ENCODE measurements at regions of chr2 and their contacts with region 1.

Region 1: GRCh38 chr2:233084488-233084887 is 24.3 kb downstream of the INPP5D start:
- DNase-seq: no peak
- H3K4me3 ChIP-seq: no peak overlapping the region
- H3K27ac ChIP-seq: no peak overlapping the region
- H3K4me1 ChIP-seq: no peaks in the 10 kb centered on the region
- H3K27me3 ChIP-seq: no peaks in the 10 kb centered on the region
- CTCF ChIP-seq: no peak

Region 2: GRCh38 chr2:233037078-233037477 is 47.4 kb before region 1 on chr2:
- CTCF ChIA-PET with region 1: no interaction called
- POLR2A ChIA-PET with region 1: no interaction called
- intact Hi-C with region 1: no loop called
- DNase-seq: peak in 1 of 2 experiments; percentile 74
- H3K4me3 ChIP-seq: no peak overlapping the region
- H3K27ac ChIP-seq: peak overlapping the region; percentile 50
- H3K4me1 ChIP-seq: peaks cover 48% of the 10 kb centered on the region
- H3K27me3 ChIP-seq: no peaks in the 10 kb centered on the region
- CTCF ChIP-seq: no peak

Region 3: GRCh38 chr2:233061591-233062450 is 22.7 kb before region 1 on chr2:
- CTCF ChIA-PET with region 1: no interaction called
- POLR2A ChIA-PET with region 1: no interaction called
- intact Hi-C with region 1: no loop called
- DNase-seq: peak in 1 of 2 experiments; percentile 31
- H3K4me3 ChIP-seq: no peak overlapping the region
- H3K27ac ChIP-seq: no peak overlapping the region
- H3K4me1 ChIP-seq: no peaks in the 10 kb centered on the region
- H3K27me3 ChIP-seq: no peaks in the 10 kb centered on the region
- CTCF ChIP-seq: 0 out of 2 replicates have a peak, but pooled peaks have one; percentile 17

Region 4: DNA sequence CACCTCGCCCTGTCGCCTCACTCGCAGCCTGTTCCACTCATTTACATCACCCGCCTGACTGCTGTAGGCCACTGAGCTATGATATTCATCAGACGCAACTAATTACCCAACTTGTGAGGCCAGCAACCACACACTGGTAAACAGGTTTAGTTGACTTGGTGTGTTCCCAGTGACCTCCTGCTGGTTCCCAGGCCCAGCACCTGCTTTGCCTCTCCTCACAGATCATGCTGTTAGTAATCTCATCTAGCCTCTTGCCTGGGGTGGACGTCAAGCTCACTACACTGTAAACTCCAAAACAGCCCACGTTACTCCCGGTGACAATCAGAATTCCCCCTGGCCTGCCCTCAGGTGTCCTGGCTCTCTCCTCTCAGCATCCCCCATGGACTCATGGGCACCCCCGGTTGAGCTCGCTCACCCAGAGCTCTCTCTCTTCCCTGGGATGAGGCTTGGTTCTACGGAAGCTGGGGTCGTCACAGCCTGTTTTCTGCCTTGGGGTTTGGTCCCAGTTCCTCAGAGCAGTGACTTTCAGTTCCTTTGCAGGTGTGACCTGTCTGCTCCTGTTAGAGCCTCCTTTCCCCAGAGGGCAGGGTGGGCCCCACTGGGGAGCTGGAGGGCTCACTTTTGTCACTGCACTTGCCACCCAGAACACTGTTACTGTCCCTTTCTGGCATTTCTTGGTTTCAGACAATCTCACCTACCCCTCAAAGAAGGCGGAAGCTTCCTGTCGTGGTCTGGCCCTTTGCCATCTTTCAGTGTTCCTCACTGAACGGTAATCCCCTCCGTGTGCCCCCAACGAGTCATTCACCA is 15.9 kb after region 1 on chr2:
- CTCF ChIA-PET with region 1: no interaction called
- POLR2A ChIA-PET with region 1: no interaction called
- intact Hi-C with region 1: no loop called
- DNase-seq: no peak
- H3K4me3 ChIP-seq: no peak overlapping the region
- H3K27ac ChIP-seq: no peak overlapping the region
- H3K4me1 ChIP-seq: no peaks in the 10 kb centered on the region
- H3K27me3 ChIP-seq: no peaks in the 10 kb centered on the region
- CTCF ChIP-seq: no peak

Region 5: GRCh38 chr2:233152541-233152940 is 68.1 kb after region 1 on chr2:
- CTCF ChIA-PET with region 1: no interaction called
- POLR2A ChIA-PET with region 1: interaction called, 12 read pairs
- intact Hi-C with region 1: no loop called
- DNase-seq: no peak
- H3K4me3 ChIP-seq: no peak overlapping the region
- H3K27ac ChIP-seq: no peak overlapping the region
- H3K4me1 ChIP-seq: no peaks in the 10 kb centered on the region
- H3K27me3 ChIP-seq: no peaks in the 10 kb centered on the region
- CTCF ChIP-seq: no peak

Region 6: GRCh38 chr2:233173115-233173514 is 88.6 kb after region 1 on chr2:
- CTCF ChIA-PET with region 1: no interaction called
- POLR2A ChIA-PET with region 1: interaction called, 23 read pairs
- intact Hi-C with region 1: no loop called
- DNase-seq: peak in 1 of 2 experiments; percentile 18
- H3K4me3 ChIP-seq: no peak overlapping the region
- H3K27ac ChIP-seq: no peak overlapping the region
- H3K4me1 ChIP-seq: peaks cover 32% of the 10 kb centered on the region
- H3K27me3 ChIP-seq: no peaks in the 10 kb centered on the region
- CTCF ChIP-seq: no peak

Measured in PC-9 (cell line).